Endothelial cell of umbilical vein (primary cell): ENCODE measurements at regions of chr12 and their contacts with region 1.

Region 1: DNA sequence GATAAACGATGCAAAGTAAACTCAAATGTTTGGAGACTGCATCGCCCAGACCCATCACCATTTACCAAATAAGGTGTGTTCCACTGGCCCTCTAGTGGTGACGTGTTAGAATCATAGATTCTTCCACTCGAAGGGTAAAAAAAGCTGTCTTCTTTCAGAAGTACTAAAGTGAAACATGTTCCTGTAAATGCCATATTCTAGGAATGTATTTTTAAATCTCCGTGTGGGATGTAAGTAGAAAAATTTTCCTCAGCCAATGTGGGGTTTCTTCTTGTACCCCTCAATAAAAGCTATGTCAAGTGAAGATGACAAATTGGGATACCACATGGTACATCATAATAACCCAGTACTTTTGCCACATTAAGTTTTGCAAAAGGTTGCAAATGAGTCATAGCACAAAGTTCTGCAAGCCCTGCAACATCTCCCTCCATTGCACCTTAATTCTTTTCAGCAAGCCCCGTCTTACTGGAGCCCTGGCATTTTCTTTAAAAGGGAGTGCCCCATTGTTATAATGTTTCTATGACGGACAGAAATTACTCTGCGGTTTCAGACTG is 100.8 kb downstream of the CCER1 start:
- DNase-seq: peak; percentile 60
- H3K4me3 ChIP-seq: no peak overlapping the region
- H3K27ac ChIP-seq: no peak overlapping the region
- H3K4me1 ChIP-seq: no peaks in the 10 kb centered on the region
- H3K27me3 ChIP-seq: no peaks in the 10 kb centered on the region
- CTCF ChIP-seq: peak; percentile 59 to 63
- POLR2A ChIP-seq: no peak

Region 2: GRCh38 chr12:90010089-90010488 is 844.1 kb before region 1 on chr12:
- CTCF ChIA-PET with region 1: interaction called, 12 read pairs
- POLR2A ChIA-PET with region 1: no interaction called
- dilution Hi-C with region 1: no loop called
- intact Hi-C with region 1: no loop called
- DNase-seq: peak; percentile 37
- H3K4me3 ChIP-seq: no peak overlapping the region
- H3K27ac ChIP-seq: no peak overlapping the region
- H3K4me1 ChIP-seq: no peaks in the 10 kb centered on the region
- H3K27me3 ChIP-seq: no peaks in the 10 kb centered on the region
- CTCF ChIP-seq: peak in 1 of 2 donors; percentile 14
- POLR2A ChIP-seq: no peak

Region 3: DNA sequence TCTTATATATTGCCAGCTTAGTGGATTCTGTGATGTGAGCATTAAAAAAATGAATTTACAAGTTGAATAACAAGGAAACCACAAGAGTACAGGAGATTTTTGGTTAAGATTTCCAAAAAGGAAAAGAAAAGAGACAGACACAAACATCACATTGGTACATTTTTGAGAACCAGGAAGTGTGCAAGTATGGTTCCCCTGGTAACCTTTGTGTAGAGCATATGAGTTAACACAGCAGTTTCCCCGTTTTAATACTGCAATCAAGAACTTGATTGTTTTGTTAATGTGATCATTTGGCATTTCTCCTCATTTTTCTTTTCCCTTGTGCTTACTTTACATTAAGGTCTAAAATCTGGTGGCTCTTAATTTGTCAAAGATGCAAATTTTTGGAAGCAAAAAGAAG is 655.2 kb before region 1 on chr12:
- CTCF ChIA-PET with region 1: no interaction called
- POLR2A ChIA-PET with region 1: no interaction called
- dilution Hi-C with region 1: no loop called
- intact Hi-C with region 1: loop called (anchors 2 kb)
- DNase-seq: peak; percentile 91
- H3K4me3 ChIP-seq: peak overlapping the region in 1 of 3 experiments; percentile 17
- H3K27ac ChIP-seq: peak overlapping the region; percentile 95
- H3K4me1 ChIP-seq: peaks cover 27% of the 10 kb centered on the region
- H3K27me3 ChIP-seq: no peaks in the 10 kb centered on the region
- CTCF ChIP-seq: no peak
- POLR2A ChIP-seq: no peak

Region 4: GRCh38 chr12:90543374-90543773 is 310.8 kb before region 1 on chr12:
- CTCF ChIA-PET with region 1: no interaction called
- POLR2A ChIA-PET with region 1: no interaction called
- dilution Hi-C with region 1: no loop called
- intact Hi-C with region 1: loop called (anchors 10 kb)
- DNase-seq: peak; percentile 93
- H3K4me3 ChIP-seq: no peak overlapping the region
- H3K27ac ChIP-seq: peak overlapping the region; percentile 97
- H3K4me1 ChIP-seq: peaks cover 18% of the 10 kb centered on the region
- H3K27me3 ChIP-seq: no peaks in the 10 kb centered on the region
- CTCF ChIP-seq: no peak
- POLR2A ChIP-seq: peak; percentile 55

Region 5: DNA sequence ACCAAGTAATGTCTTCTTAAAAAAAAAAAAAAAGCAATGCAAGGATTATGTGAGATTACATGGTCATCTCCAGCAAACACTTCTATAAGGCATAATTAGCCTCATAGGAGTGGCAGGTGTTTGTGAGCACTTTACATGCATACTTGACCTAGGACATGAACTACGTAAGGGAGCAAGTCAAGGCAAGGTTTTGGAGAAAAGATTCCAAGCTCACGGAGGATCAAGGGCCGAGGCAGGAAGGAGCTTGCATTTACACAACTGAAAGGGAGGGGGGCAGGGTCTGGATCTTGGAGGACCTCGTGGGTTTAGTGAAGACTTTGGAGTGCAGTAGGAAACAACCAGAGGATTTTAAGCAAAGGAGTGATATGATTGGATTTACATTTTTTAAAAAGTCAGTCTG is 11.7 kb before region 1 on chr12:
- CTCF ChIA-PET with region 1: interaction called, 19 read pairs
- POLR2A ChIA-PET with region 1: no interaction called
- dilution Hi-C with region 1: no loop called
- intact Hi-C with region 1: no loop called
- DNase-seq: no peak
- H3K4me3 ChIP-seq: no peak overlapping the region
- H3K27ac ChIP-seq: no peak overlapping the region
- H3K4me1 ChIP-seq: no peaks in the 10 kb centered on the region
- H3K27me3 ChIP-seq: no peaks in the 10 kb centered on the region
- CTCF ChIP-seq: no peak
- POLR2A ChIP-seq: no peak